Activated B cell treated with CpG ODN at 0.5 μM for 24 hours (primary cell): ENCODE measurements at regions of chr1 and their contacts with region 1.

Region 1: DNA sequence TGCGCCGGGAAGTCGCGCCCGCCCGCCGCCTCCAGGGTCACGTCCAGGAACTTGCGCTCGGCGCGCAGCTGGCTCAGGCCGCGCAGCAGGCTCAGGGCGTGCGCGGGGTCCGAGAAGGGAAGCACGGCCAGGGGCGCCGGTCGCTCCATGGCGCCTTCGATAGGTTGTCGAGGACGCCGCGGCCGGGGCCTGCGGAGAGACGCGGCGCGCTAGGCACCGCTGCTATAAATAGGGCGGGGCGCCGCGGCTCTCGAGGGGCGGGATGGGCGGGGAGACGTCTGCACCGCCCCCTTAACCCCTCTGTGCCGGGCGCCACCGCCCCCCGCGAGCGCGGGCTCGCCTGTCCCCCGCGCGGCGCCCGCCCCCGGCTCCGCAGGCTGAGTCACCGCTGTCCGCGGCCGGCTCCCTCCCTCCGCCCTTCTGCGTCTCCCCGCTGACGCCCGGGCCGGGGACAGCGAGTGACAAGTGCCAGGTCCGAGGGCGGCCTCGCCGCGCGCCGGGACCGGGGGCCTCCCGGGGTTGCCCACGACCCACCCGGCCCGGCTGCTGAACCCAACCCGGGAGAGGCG is at the start of gene KLHL21:
- DNase-seq: peak; percentile 86
- ATAC-seq: peak; percentile 70
- H3K4me3 Mint-ChIP-seq: peak within 1 kb of the TSS; percentile 91
- H3K27ac Mint-ChIP-seq: peak within 1 kb of the TSS; percentile 96
- H3K4me1 Mint-ChIP-seq: peaks cover 40% of the 10 kb centered on the region
- H3K27me3 Mint-ChIP-seq: no peaks in the 10 kb centered on the region
- CTCF ChIP-seq: no peak
- total RNA-seq, gene KLHL21: 14.6 and 15.9 TPM in 2 replicates

Region 2: DNA sequence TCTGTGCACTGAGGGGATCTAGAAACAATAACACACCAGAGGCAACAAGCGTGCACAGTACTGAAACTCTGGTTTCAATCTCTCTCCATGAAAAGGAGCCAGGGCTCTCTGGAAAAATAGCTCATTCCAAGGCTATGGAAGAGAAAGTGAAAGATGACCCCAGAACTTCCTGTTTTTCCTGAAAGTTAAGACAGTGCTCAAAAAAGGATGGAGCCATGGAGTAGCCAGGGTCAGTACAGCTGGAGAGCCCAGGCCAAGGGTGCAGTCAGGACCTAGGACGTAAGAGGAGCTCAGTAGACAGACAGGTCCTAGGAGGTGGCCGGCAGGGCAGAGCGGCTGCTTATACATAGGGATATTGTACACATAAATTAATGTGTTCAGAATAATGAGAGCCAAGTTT is 67.5 kb before region 1 on chr1:
- CTCF ChIA-PET with region 1: no interaction called
- POLR2A ChIA-PET with region 1: no interaction called
- intact Hi-C with region 1: no loop called
- DNase-seq: no peak
- ATAC-seq: no peak
- H3K4me3 Mint-ChIP-seq: no peak overlapping the region
- H3K27ac Mint-ChIP-seq: no peak overlapping the region
- H3K4me1 Mint-ChIP-seq: peaks cover 4% of the 10 kb centered on the region
- H3K27me3 Mint-ChIP-seq: no peaks in the 10 kb centered on the region
- CTCF ChIP-seq: no peak

Region 3: GRCh38 chr1:6624710-6625583 is 22.2 kb after region 1 on chr1 and contains the start of gene THAP3:
- CTCF ChIA-PET with region 1: interaction called, 3 read pairs
- POLR2A ChIA-PET with region 1: interaction called, 11 read pairs
- intact Hi-C with region 1: loop called (anchors 1 kb)
- DNase-seq: peak; percentile 83
- ATAC-seq: peak; percentile 97
- H3K4me3 Mint-ChIP-seq: peak within 1 kb of the TSS; percentile 86
- H3K27ac Mint-ChIP-seq: peak within 1 kb of the TSS; percentile 71
- H3K4me1 Mint-ChIP-seq: peaks cover 32% of the 10 kb centered on the region
- H3K27me3 Mint-ChIP-seq: no peaks in the 10 kb centered on the region
- CTCF ChIP-seq: no peak
- total RNA-seq, gene THAP3: 16.2 and 21.3 TPM in 2 replicates

Region 4: GRCh38 chr1:6701437-6702153 is 98.8 kb after region 1 on chr1 and contains the start of gene DNAJC11:
- CTCF ChIA-PET with region 1: no interaction called
- POLR2A ChIA-PET with region 1: no interaction called
- intact Hi-C with region 1: loop called (anchors 1 kb)
- DNase-seq: peak; percentile 99
- ATAC-seq: peak; percentile 95
- H3K4me3 Mint-ChIP-seq: peak within 1 kb of the TSS; percentile 92
- H3K27ac Mint-ChIP-seq: peak within 1 kb of the TSS; percentile 88
- H3K4me1 Mint-ChIP-seq: peaks cover 21% of the 10 kb centered on the region
- H3K27me3 Mint-ChIP-seq: no peaks in the 10 kb centered on the region
- CTCF ChIP-seq: peak; percentile 28
- total RNA-seq, gene DNAJC11: 57.0 and 65.6 TPM in 2 replicates